Activated B cell treated with CpG ODN at 0.5 μM for 24 hours (primary cell): ENCODE measurements at regions of chr6 and their contacts with region 1.

Region 1: DNA sequence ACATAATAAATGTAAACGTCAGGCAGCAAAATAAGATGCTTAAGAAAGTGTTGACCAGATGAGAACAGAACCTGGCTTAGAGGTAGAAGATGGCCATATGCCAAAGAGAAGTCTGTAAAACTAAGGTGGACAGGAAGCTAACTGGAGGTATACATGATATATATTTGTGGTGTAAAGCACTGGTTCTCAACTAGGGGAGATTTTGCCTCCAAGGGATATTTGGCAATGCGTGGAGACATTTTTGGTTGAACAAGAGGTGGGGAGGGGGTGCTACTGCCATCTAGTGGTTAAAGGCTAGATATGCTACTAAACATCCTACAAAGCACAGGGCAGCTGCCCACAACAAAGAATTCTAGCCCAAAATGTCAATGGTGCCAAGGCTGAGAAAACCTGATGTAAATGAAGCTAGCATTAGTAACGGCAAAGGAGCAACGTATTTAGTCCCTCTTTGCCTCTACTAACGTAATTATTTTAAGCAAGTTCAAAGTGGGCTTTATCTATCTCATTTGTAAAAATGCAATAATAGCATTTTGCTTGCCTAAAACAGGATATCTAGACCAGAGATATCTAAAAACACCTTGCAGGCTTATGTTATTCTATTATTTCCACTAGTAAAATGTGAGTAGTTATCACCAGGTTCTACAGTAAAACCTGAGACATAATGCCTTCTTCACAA is 182.6 kb downstream of the RNGTT start:
- DNase-seq: no peak
- ATAC-seq: peak; percentile 83
- H3K4me3 Mint-ChIP-seq: no peak overlapping the region
- H3K27ac Mint-ChIP-seq: no peak overlapping the region
- H3K4me1 Mint-ChIP-seq: peaks cover 16% of the 10 kb centered on the region
- H3K27me3 Mint-ChIP-seq: no peaks in the 10 kb centered on the region
- CTCF ChIP-seq: no peak

Region 2: DNA sequence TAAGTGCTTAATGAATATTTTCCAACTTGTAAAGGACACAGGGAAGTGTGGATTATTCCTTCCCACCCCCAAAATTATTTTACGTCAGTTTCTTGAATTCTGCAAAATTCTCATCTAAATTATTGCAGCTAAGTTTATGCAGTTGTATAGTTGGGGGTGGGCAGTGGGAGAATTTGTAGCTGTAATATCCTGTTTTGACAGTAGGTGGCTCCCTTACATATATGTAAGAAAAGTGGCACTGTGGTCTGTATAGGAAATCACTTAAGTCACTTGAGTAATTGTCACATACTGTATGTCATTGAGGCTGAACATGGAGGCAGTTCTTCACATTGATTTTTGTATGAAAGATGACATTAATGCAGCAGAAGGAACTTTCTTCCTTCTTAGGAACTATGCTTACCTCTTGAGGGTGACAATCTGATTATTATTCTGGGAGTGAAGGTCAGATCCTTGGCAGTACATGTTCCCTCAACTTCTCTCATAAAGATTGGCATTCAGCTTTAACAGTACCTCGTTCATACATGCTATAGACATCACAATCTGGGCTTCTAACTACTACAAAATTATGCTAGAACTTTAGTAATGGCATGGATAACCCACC is 1387.7 kb before region 1 on chr6:
- CTCF ChIA-PET with region 1: no interaction called
- POLR2A ChIA-PET with region 1: no interaction called
- intact Hi-C with region 1: loop called (anchors 1 kb)
- DNase-seq: no peak
- ATAC-seq: peak; percentile 94
- H3K4me3 Mint-ChIP-seq: no peak overlapping the region
- H3K27ac Mint-ChIP-seq: no peak overlapping the region
- H3K4me1 Mint-ChIP-seq: peaks cover 5% of the 10 kb centered on the region
- H3K27me3 Mint-ChIP-seq: no peaks in the 10 kb centered on the region
- CTCF ChIP-seq: peak; percentile 53

Region 3: GRCh38 chr6:88165844-88166492 is 614.9 kb before region 1 on chr6 and contains the start of gene CNR1:
- CTCF ChIA-PET with region 1: no interaction called
- POLR2A ChIA-PET with region 1: no interaction called
- intact Hi-C with region 1: loop called (anchors 5 kb)
- DNase-seq: no peak
- ATAC-seq: peak; percentile 59
- H3K4me3 Mint-ChIP-seq: peak within 1 kb of the TSS; percentile 91
- H3K27ac Mint-ChIP-seq: peak within 1 kb of the TSS; percentile 87
- H3K4me1 Mint-ChIP-seq: peaks cover 34% of the 10 kb centered on the region
- H3K27me3 Mint-ChIP-seq: peaks cover 15% of the 10 kb centered on the region
- CTCF ChIP-seq: no peak
- total RNA-seq, gene CNR1: 2.7 and 4.4 TPM in 2 replicates

Region 4: GRCh38 chr6:88599561-88599960 is 181.3 kb before region 1 on chr6:
- CTCF ChIA-PET with region 1: interaction called, 3 read pairs
- POLR2A ChIA-PET with region 1: no interaction called
- intact Hi-C with region 1: loop called (anchors 2 kb)
- DNase-seq: no peak
- ATAC-seq: peak; percentile 37
- H3K4me3 Mint-ChIP-seq: no peak overlapping the region
- H3K27ac Mint-ChIP-seq: no peak overlapping the region
- H3K4me1 Mint-ChIP-seq: no peaks in the 10 kb centered on the region
- H3K27me3 Mint-ChIP-seq: no peaks in the 10 kb centered on the region
- CTCF ChIP-seq: no peak

Region 5: DNA sequence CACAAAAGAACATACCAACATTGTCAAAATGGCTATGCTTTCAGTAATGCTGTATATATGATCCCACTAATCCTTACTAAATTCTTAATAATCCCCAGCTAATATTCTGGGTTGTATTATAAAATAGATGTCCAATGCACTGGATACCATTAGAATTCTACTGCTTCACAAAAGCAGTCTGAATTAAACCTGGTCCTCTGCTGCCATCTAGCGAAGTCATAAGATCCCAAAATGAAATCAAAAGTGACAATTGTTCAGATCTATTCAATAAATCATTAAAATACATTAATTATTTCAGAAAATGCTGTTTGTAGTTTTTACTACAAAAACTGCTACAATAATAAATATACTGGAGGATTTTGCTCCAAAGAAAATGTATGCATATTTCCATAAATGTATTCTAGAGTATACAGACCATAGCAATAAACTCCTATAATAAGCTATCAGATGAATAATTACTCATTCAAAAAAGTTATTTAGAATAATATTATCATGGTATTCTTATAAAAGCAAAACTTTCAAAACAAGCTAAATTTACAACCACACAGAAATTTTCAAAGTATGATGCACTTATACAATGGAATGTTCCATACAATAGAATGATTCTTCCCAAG is 90.0 kb after region 1 on chr6:
- CTCF ChIA-PET with region 1: no interaction called
- POLR2A ChIA-PET with region 1: no interaction called
- intact Hi-C with region 1: loop called (anchors 5 kb)
- DNase-seq: no peak
- ATAC-seq: peak; percentile 42
- H3K4me3 Mint-ChIP-seq: no peak overlapping the region
- H3K27ac Mint-ChIP-seq: no peak overlapping the region
- H3K4me1 Mint-ChIP-seq: peaks cover 10% of the 10 kb centered on the region
- H3K27me3 Mint-ChIP-seq: no peaks in the 10 kb centered on the region
- CTCF ChIP-seq: no peak